Dendritic cell treated with granulocyte-macrophage colony-stimulating factor and Interleukin-4, amounts not matched to agents 40 ng/mL and 50 ng/mL, for 4 days (primary cell): ENCODE measurements at regions of chr5 and their contacts with region 1.

Region 1: GRCh38 chr5:58849921-58850667 is 267.2 kb downstream of the RAB3C start:
- H3K4me3 Mint-ChIP-seq: no peak overlapping the region
- H3K27ac Mint-ChIP-seq: no peak overlapping the region
- H3K4me1 Mint-ChIP-seq: peaks cover 6% of the 10 kb centered on the region
- H3K27me3 Mint-ChIP-seq: no peaks in the 10 kb centered on the region

Region 2: DNA sequence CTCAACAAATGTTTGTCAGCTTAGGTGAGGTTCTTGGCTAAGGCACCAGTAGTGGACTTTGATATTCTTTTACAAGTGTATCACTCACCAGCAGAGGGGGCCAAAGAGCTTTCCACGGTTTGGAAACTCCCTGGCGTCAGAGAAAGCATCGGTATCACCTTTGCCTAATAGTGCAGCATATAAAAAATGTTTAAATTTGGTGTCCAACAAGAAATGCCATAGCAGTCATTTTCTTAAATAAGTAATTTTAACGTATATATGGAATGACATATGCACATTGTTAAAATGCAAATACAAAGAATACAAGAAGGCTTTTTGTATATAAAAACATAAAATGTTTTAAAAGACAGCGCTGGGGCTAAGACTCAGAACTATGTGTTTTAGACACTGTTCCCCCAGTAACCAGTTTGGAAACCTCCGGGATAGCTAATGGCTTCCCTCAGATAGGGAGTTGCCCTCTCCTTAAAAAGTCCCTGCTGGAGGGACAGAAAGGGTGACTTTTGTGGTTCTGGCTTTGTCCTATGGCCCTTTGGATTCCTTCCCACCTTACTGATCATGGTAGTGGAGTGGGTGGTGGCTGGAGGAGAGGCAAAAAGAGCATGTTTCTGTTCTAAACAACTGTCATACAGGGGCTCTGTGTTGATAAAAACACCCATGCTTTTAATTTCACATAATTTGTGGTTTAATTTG is 1551.7 kb before region 1 on chr5:
- intact Hi-C with region 1: loop called (anchors 10 kb)
- H3K4me3 Mint-ChIP-seq: no peak overlapping the region
- H3K27ac Mint-ChIP-seq: no peak overlapping the region
- H3K4me1 Mint-ChIP-seq: peaks cover 13% of the 10 kb centered on the region
- H3K27me3 Mint-ChIP-seq: no peaks in the 10 kb centered on the region

Region 3: GRCh38 chr5:57499262-57500050 is 1350.6 kb before region 1 on chr5:
- intact Hi-C with region 1: loop called (anchors 5 kb)
- H3K4me3 Mint-ChIP-seq: peak overlapping the region; percentile 45
- H3K27ac Mint-ChIP-seq: no peak overlapping the region
- H3K4me1 Mint-ChIP-seq: peaks cover 8% of the 10 kb centered on the region
- H3K27me3 Mint-ChIP-seq: peaks cover 2% of the 10 kb centered on the region

Region 4: DNA sequence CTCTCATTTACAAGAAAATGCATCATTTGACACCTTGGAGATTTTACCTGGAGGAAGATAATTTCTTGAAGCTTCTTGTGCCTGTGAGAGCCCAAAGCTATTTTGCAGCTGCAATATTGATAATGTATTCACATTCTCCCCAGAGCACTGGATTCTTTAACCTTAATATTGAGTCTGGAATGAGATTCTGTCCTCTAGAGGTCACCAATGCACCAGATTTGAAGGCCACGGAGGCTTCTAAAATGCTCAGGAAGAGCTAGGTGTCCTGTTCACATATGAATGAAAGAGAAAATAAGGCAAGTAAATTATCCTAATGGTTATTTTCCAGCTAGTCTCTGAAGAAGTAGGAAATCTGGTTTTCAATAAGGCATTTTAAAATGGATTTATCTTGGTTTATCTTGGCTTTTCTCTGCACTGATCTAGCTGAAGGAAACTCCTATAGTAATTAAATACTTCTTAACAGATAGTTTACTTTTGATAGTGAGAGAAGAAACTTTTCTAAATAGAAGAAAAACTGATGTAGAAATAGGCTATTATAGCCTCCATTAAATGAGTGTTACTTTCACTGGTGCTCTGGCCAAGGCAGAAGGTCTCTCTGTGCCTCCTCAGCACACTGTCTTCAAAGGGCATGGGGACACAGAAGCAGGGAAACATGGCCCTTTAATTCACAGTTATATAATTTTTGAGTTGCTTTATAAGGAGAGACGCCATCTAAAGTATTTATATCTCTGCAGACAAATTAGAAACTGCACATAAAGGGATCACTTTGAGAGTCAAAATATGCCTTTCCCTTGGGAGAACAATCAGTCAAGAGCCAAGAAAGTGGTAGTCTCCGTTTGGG is 1070.5 kb before region 1 on chr5:
- intact Hi-C with region 1: loop called (anchors 10 kb)
- H3K4me3 Mint-ChIP-seq: no peak overlapping the region
- H3K27ac Mint-ChIP-seq: no peak overlapping the region
- H3K4me1 Mint-ChIP-seq: no peaks in the 10 kb centered on the region
- H3K27me3 Mint-ChIP-seq: no peaks in the 10 kb centered on the region

Region 5: DNA sequence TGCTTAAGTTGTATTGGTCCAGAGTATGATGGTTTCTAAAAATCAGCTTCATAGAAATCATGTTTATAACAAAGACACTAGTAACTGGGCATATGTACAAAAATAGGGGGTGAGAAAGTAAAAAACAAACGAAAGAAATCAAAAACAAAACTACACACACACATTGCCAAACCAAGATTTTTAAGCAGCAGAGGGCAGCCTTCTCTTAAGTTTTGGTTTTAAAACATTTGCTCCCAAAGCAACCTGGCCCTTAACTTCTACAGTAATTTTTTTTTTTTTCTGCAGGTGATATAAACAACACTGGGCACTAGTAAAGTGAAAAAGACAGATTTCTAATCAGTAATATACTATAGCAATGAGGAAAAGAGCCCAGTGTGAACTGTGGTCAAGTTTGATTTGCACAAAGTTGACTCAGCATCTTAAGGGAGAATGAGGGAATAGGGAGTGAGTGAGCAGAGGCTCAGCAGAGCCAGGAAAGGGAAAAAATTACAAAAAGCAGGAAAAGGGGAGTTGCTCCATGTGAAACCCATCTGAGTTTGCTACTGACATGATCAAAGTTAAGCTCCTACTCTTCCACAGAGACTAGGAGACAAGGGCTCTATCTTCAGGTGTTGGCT is 372.2 kb before region 1 on chr5:
- intact Hi-C with region 1: loop called (anchors 1 kb)
- H3K4me3 Mint-ChIP-seq: no peak overlapping the region
- H3K27ac Mint-ChIP-seq: no peak overlapping the region
- H3K4me1 Mint-ChIP-seq: peaks cover 19% of the 10 kb centered on the region
- H3K27me3 Mint-ChIP-seq: no peaks in the 10 kb centered on the region

Region 6: DNA sequence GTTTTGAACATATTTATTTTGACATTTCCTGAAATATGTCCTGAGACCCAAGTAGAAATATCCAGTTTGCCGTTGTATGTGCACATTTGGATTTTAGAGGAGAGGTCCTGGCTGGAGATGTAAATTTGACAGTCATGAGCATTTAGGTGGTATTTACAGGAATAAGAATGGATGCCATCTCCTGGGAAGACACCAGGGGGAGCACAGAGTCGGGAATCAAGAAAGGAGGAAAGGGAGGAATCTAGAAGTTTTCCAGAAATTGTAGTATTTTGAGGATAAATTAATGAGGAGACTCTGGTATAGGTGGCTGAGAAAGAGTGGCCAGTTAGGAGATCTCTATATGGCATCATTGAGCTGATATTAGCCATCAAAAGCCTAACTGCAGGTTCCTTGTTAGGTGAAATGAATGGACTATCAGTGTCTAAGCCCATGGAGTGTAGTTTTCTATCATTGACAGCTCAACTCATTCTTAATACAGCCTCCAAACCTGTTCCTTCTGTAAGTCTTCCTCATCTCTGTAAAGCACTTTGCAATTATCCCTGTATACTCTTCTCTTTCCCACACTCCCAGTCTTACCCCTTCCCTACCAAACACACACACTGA is 351.7 kb before region 1 on chr5:
- intact Hi-C with region 1: loop called (anchors 1 kb)
- H3K4me3 Mint-ChIP-seq: no peak overlapping the region
- H3K27ac Mint-ChIP-seq: no peak overlapping the region
- H3K4me1 Mint-ChIP-seq: peaks cover 57% of the 10 kb centered on the region
- H3K27me3 Mint-ChIP-seq: no peaks in the 10 kb centered on the region

Region 7: GRCh38 chr5:58958701-58959100 is 108.6 kb after region 1 on chr5:
- intact Hi-C with region 1: no loop called
- H3K4me3 Mint-ChIP-seq: no peak overlapping the region
- H3K27ac Mint-ChIP-seq: no peak overlapping the region
- H3K4me1 Mint-ChIP-seq: no peaks in the 10 kb centered on the region
- H3K27me3 Mint-ChIP-seq: no peaks in the 10 kb centered on the region